ENCODE measurements at regions of chr6 and their contacts with region 1.

Region 1: GRCh38 chr6:34757687-34758274 is 476 bp downstream of the SNRPC start:
- DNase-seq: no peak
- H3K4me3 Mint-ChIP-seq: no peak overlapping the region
- H3K27ac Mint-ChIP-seq: no peak overlapping the region
- H3K4me1 Mint-ChIP-seq: peaks cover 8% of the 10 kb centered on the region
- H3K27me3 Mint-ChIP-seq: no peaks in the 10 kb centered on the region

Region 2: GRCh38 chr6:34656378-34657036 is 101.3 kb before region 1 on chr6:
- intact Hi-C with region 1: no loop called
- DNase-seq: no peak
- H3K4me3 Mint-ChIP-seq: peak overlapping the region; percentile 78
- H3K27ac Mint-ChIP-seq: peak overlapping the region; percentile 97
- H3K4me1 Mint-ChIP-seq: peaks cover 46% of the 10 kb centered on the region
- H3K27me3 Mint-ChIP-seq: no peaks in the 10 kb centered on the region

Region 3: DNA sequence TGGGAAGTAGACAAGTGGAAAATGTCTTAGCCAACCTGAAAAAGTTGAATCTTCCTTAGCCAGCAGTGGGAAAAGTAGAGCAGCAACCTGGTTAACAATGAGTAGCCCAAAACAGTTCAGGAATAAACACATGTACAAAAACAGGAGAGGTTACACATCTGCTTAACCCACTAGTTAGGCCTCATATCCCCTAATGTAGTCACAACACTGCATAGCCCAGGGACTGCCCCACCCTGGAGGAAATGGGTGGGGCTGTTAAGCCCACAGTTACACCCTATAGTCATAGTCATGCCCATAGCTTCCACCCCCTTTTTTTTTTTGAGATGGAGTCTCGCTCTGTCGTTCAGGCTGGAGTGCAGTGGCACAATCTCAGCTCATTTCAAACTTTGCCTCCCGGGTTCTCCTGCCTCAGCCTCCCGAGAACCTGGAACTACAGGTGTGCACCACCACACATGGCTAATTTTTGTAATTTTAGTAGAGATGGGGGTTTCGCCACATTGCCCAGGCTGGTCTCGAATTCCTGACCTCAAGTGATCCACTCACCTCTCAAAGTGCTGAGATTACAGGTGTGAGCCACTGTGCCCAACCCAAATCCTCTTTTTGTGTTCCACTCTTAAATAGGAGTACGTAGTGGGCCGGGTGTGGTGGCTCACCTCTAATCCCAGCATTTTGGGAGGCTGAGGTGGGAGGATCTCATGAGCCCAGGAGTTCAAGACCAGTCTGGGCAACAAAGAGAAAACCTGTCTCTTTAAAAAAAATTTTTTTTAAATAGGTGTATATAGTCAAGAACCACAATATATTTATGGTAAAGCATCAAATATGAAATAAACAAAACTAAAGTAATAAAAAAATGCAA is 85.8 kb before region 1 on chr6:
- intact Hi-C with region 1: loop called (anchors 5 kb)
- DNase-seq: peak; percentile 74
- H3K4me3 Mint-ChIP-seq: peak overlapping the region; percentile 64
- H3K27ac Mint-ChIP-seq: peak overlapping the region; percentile 94
- H3K4me1 Mint-ChIP-seq: peaks cover 47% of the 10 kb centered on the region
- H3K27me3 Mint-ChIP-seq: no peaks in the 10 kb centered on the region

Region 4: GRCh38 chr6:34791701-34792235 is 34.0 kb after region 1 on chr6 and contains the start of gene BLTP3A:
- intact Hi-C with region 1: loop called (anchors 1 kb)
- DNase-seq: peak; percentile 77
- H3K4me3 Mint-ChIP-seq: peak within 1 kb of the TSS; percentile 94
- H3K27ac Mint-ChIP-seq: peak within 1 kb of the TSS; percentile 92
- H3K4me1 Mint-ChIP-seq: peaks cover 21% of the 10 kb centered on the region
- H3K27me3 Mint-ChIP-seq: peaks cover 5% of the 10 kb centered on the region
- total RNA-seq, gene BLTP3A: 15.1 and 16.3 TPM in 2 replicates

Region 5: GRCh38 chr6:34887753-34888513 is 130.2 kb after region 1 on chr6 and contains the start of gene TAF11:
- intact Hi-C with region 1: loop called (anchors 1 kb)
- DNase-seq: peak; percentile 86
- H3K4me3 Mint-ChIP-seq: peak within 1 kb of the TSS; percentile 97
- H3K27ac Mint-ChIP-seq: peak within 1 kb of the TSS; percentile 96
- H3K4me1 Mint-ChIP-seq: peaks cover 24% of the 10 kb centered on the region
- H3K27me3 Mint-ChIP-seq: peaks cover 11% of the 10 kb centered on the region
- total RNA-seq, gene TAF11: 31.6 and 34.0 TPM in 2 replicates